Spleen (tissue), 13 donors: ENCODE measurements at regions of chr5 and their contacts with region 1.

Region 1: GRCh38 chr5:176959051-176959450 is 47.5 kb downstream of the UIMC1 start:
- DNase-seq: no peak
- H3K4me3 ChIP-seq: no peak overlapping the region
- H3K27ac ChIP-seq: no peak overlapping the region
- H3K4me1 ChIP-seq: peaks cover 0 to 8% (median 0%) of the 10 kb centered on the region in 6 donors
- H3K27me3 ChIP-seq: no peaks in the 10 kb centered on the region
- CTCF ChIP-seq: peak in 9 of 11 experiments; percentile 11 to 63 (median 39)
- POLR2A ChIP-seq: no peak

Region 2: DNA sequence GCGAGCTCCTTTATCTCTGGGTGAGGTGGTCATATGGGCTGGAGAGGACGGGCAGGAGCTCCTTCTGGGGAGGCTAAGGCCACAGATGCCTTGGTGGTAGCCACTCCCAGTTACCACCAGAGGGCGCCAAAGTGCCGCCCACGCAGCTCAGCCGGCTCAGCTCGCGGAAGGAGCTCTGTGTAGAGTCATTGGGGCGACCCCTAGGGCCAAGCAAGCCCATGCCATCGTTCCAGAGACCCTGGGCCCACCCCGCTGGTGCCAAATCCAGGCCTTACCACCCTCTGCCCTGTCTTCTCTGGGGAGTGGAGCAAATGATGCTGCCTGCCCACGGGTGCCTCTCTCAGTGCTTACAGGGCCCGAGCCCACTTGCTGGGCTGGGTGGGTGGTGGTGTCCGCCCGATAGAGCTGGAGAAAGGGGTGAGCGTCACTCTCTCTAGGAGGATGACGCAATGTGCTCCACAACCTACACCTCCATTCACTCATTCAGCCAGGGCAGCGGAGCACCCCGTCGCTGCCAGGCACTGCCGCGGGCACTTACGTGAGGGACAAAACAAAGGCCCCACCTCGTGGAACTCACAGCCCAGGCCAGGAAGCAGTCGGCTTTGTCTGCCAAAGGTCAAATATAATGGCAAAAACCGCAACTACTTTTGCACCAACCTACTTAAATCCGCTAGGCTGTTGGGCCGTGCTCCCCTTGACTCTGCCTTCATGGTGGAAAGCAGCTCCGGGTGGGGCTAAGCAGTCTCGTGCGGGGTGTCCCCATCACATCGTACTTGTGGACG is 298.0 kb before region 1 on chr5:
- intact Hi-C with region 1: loop called (anchors 5 kb)
- DNase-seq: peak; percentile 95
- H3K4me3 ChIP-seq: peak overlapping the region in 1 of 8 donors; percentile 15
- H3K27ac ChIP-seq: no peak overlapping the region
- H3K4me1 ChIP-seq: peaks cover 12 to 38% (median 32%) of the 10 kb centered on the region in 6 donors
- H3K27me3 ChIP-seq: peaks cover 0 to 36% (median 10%) of the 10 kb centered on the region in 7 donors
- CTCF ChIP-seq: peak; percentile 74 to 98 (median 97)
- POLR2A ChIP-seq: no peak

Region 3: DNA sequence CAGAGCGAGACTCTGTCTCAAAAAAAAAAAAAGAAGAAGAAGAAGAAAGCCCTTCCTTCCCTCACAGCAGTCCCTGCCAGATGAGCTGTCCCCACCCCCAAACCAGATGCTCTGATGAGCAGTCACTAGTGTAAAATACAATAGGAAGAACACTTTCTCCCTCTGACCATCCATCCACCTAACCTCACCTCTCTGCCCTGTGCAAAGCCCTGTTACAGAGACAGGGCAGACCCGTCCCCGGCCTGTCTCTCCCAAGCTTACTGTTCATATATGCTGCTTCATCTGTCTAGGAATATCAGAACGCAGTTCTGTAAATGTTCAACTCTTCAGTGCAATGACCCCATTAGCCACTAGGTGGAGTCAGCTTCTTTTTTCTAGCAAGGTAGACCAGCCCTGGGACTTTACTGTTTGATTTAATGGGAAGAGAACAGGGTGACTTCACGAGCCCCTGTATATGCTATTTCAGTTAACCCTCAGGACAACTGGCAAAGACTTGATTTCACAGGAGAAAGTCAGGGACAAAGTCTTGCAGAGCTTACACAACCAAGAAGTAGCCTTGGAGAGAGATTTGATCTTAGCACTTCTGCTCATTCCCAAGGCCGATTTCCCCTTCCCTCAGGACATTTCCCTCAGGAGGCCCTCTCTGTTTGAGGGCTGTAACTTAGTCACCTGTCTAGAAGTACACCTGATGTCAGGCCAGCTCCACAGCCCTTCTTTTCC is 112.8 kb after region 1 on chr5:
- intact Hi-C with region 1: no loop called
- DNase-seq: no peak
- H3K4me3 ChIP-seq: peak overlapping the region in 1 of 8 donors; percentile 8
- H3K27ac ChIP-seq: peak overlapping the region in 4 of 8 donors; percentile 15 to 59 (median 36)
- H3K4me1 ChIP-seq: peaks cover 0 to 21% (median 11%) of the 10 kb centered on the region in 6 donors
- H3K27me3 ChIP-seq: no peaks in the 10 kb centered on the region
- CTCF ChIP-seq: peak; percentile 63 to 89 (median 84)
- POLR2A ChIP-seq: no peak